K562 (cell line): ENCODE measurements at regions of chr2 and their contacts with region 1.

Region 1: GRCh38 chr2:188291617-188292347 is at the start of gene GULP1:
- DNase-seq: peak; percentile 60 to 86 (median 67)
- ATAC-seq: peak; percentile 69
- H3K4me3 ChIP-seq: peak within 1 kb of the TSS; percentile 75
- H3K27ac ChIP-seq: peak within 1 kb of the TSS; percentile 96
- H3K4me1 ChIP-seq: peaks cover 0 to 15% of the 10 kb centered on the region in 2 experiments; a peak in 3 of 5 replicates
- H3K27me3 ChIP-seq: no peaks in the 10 kb centered on the region
- CTCF ChIP-seq: peak; percentile 50 to 75 (median 61)
- EP300 ChIP-seq: peak; percentile 37; the same call in 1 of the 2 replicates
- POLR2A ChIP-seq: no peak; the same call in 1 of the 2 replicates
- RAD21 ChIP-seq: peak in 1 of 2 experiments; percentile 46; a peak in 3 of 4 replicates
- polyA plus RNA-seq, gene GULP1: 8.5 to 8.6 TPM

Region 2: GRCh38 chr2:187554011-187554703 is 737.6 kb before region 1 on chr2 and contains the start of gene TFPI:
- CTCF ChIA-PET with region 1: no interaction called
- POLR2A ChIA-PET with region 1: no interaction called
- in situ Hi-C with region 1: no loop called
- intact Hi-C with region 1: loop called (anchors 1 kb)
- DNase-seq: peak; percentile 25 to 86 (median 53)
- ATAC-seq: peak; percentile 91
- H3K4me3 ChIP-seq: peak within 1 kb of the TSS; percentile 53
- H3K27ac ChIP-seq: peak within 1 kb of the TSS; percentile 90
- H3K4me1 ChIP-seq: peaks cover 0 to 12% of the 10 kb centered on the region in 2 experiments; a peak in 2 of 5 replicates
- H3K27me3 ChIP-seq: no peaks in the 10 kb centered on the region
- CTCF ChIP-seq: no peak
- EP300 ChIP-seq: peak; percentile 53; the same call in 1 of the 2 replicates
- POLR2A ChIP-seq: peak; percentile 89
- RAD21 ChIP-seq: 0 out of 4 replicates have a peak, but pooled peaks of 1 of the 2 experiments have one; percentile 19
- polyA plus RNA-seq, gene TFPI: 179 to 219 TPM

Region 3: GRCh38 chr2:188256420-188256819 is 35.4 kb before region 1 on chr2:
- CTCF ChIA-PET with region 1: no interaction called
- POLR2A ChIA-PET with region 1: no interaction called
- in situ Hi-C with region 1: no loop called
- intact Hi-C with region 1: no loop called
- DNase-seq: peak in 1 of 4 experiments; percentile 26
- ATAC-seq: peak; percentile 86
- H3K4me3 ChIP-seq: no peak overlapping the region
- H3K27ac ChIP-seq: peak overlapping the region; percentile 46; the same call in 1 of the 3 replicates
- H3K4me1 ChIP-seq: peaks cover 0 to 4% of the 10 kb centered on the region in 2 experiments; a peak in 1 of 5 replicates
- H3K27me3 ChIP-seq: no peaks in the 10 kb centered on the region
- CTCF ChIP-seq: no peak
- EP300 ChIP-seq: no peak
- POLR2A ChIP-seq: no peak
- RAD21 ChIP-seq: no peak

Region 4: GRCh38 chr2:188307850-188308283 is 16.1 kb after region 1 on chr2:
- CTCF ChIA-PET with region 1: no interaction called
- POLR2A ChIA-PET with region 1: interaction called, 14 read pairs
- in situ Hi-C with region 1: no loop called
- intact Hi-C with region 1: no loop called
- DNase-seq: no peak
- ATAC-seq: no peak
- H3K4me3 ChIP-seq: no peak overlapping the region
- H3K27ac ChIP-seq: no peak overlapping the region
- H3K4me1 ChIP-seq: 0 out of 5 replicates have a peak, but pooled peaks cover 0 to under 1% of the 10 kb centered on the region in 2 experiments
- H3K27me3 ChIP-seq: no peaks in the 10 kb centered on the region
- CTCF ChIP-seq: no peak
- EP300 ChIP-seq: no peak
- POLR2A ChIP-seq: no peak
- RAD21 ChIP-seq: no peak

Region 5: DNA sequence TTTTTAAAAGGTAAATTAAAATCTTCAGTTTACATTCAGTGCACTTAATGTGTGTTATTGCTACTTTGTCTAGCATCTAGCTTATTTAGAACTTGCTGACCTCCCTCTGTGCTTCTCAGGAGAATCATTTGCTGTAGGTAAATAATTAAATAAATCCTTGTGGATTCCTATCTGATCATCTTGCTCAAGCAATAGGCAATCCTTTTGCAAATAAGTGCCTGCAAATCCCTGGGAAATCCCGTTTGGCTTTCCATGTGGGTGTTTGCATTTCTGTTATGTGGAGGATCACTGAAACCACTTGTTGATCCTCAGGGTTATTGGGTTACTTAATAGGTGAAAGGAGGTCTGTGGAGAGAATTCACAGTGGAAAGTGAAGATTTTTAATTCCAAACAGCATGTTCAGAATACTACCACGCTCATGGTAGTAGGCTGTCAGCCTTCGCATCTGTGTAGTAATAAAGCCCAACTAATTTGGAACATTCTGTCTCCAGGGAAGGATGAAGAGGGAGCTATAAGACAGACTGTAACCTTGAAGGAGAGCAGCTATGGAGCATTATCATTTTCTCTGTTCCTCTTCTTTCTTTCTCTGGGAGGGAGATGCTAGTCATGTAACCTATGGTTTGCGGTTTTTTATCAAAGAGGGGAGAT is 72.3 kb after region 1 on chr2:
- CTCF ChIA-PET with region 1: no interaction called
- POLR2A ChIA-PET with region 1: no interaction called
- in situ Hi-C with region 1: loop called (anchors 5 kb)
- intact Hi-C with region 1: loop called (anchors 1 kb)
- DNase-seq: no peak
- ATAC-seq: no peak
- H3K4me3 ChIP-seq: no peak overlapping the region
- H3K27ac ChIP-seq: no peak overlapping the region
- H3K4me1 ChIP-seq: peaks cover 0 to 3% of the 10 kb centered on the region in 2 experiments; a peak in 3 of 5 replicates
- H3K27me3 ChIP-seq: no peaks in the 10 kb centered on the region
- CTCF ChIP-seq: no peak
- EP300 ChIP-seq: no peak
- POLR2A ChIP-seq: no peak
- RAD21 ChIP-seq: no peak

Region 6: GRCh38 chr2:188456114-188456911 is 164.5 kb after region 1 on chr2:
- CTCF ChIA-PET with region 1: no interaction called
- POLR2A ChIA-PET with region 1: no interaction called
- in situ Hi-C with region 1: no loop called
- intact Hi-C with region 1: loop called (anchors 1 kb)
- DNase-seq: peak in 1 of 4 experiments; percentile 11
- ATAC-seq: peak; percentile 78
- H3K4me3 ChIP-seq: no peak overlapping the region
- H3K27ac ChIP-seq: no peak overlapping the region
- H3K4me1 ChIP-seq: no peaks in the 10 kb centered on the region
- H3K27me3 ChIP-seq: no peaks in the 10 kb centered on the region
- CTCF ChIP-seq: peak; percentile 24 to 30 (median 26); a peak in 4 of 6 replicates
- EP300 ChIP-seq: no peak
- POLR2A ChIP-seq: no peak
- RAD21 ChIP-seq: peak in 1 of 2 experiments; percentile 39; a peak in 2 of 4 replicates

Region 7: DNA sequence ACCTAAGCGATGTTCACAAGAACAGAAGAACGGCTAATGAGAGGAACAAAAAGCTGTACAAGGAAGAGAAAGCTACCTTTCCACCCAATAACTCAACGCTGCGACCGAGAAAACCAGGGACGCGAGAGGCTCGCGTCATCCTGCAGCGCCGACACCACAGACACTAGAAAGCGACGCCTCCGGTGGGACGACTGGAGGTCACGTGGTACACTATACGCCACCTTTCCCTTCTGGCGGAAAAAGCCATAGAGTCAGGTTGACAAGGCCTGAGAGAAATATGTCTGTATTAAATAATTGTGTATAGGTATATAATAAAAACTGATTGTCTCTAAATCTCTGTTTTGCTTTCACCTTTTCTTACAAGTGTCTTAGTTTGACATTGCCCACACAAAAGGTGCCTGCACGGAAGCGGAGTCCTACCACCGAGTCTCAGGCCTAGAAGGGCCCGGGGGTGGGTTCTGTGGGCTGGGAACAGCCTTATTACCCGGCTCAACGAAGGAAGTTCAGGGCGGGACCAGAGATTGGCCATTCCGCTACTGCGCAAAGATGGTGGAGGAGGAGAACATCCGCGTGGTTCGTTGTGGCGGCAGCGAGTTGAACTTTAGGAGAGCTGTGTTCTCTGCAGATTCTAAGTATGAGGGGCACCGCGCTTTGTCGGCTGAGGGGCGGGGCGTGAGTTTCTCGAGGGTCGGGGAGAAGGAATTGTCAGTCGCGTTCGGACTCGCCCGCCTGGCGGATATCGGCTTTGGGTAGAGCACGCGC is 1149.3 kb after region 1 on chr2 and contains the start of gene WDR75:
- CTCF ChIA-PET with region 1: no interaction called
- POLR2A ChIA-PET with region 1: no interaction called
- in situ Hi-C with region 1: no loop called
- intact Hi-C with region 1: loop called (anchors 10 kb)
- DNase-seq: peak; percentile 82 to 93 (median 86)
- ATAC-seq: peak; percentile 96
- H3K4me3 ChIP-seq: peak within 1 kb of the TSS; percentile 94
- H3K27ac ChIP-seq: peak within 1 kb of the TSS; percentile 80
- H3K4me1 ChIP-seq: peaks cover 4 to 13% of the 10 kb centered on the region in 2 experiments; a peak in 4 of 5 replicates
- H3K27me3 ChIP-seq: no peaks in the 10 kb centered on the region
- CTCF ChIP-seq: no peak
- EP300 ChIP-seq: peak; percentile 43
- POLR2A ChIP-seq: peak; percentile 95
- RAD21 ChIP-seq: no peak
- polyA plus RNA-seq, gene WDR75: 66.3 to 111 TPM